ENCODE measurements at regions of chr10 and their contacts with region 1.

Region 1: DNA sequence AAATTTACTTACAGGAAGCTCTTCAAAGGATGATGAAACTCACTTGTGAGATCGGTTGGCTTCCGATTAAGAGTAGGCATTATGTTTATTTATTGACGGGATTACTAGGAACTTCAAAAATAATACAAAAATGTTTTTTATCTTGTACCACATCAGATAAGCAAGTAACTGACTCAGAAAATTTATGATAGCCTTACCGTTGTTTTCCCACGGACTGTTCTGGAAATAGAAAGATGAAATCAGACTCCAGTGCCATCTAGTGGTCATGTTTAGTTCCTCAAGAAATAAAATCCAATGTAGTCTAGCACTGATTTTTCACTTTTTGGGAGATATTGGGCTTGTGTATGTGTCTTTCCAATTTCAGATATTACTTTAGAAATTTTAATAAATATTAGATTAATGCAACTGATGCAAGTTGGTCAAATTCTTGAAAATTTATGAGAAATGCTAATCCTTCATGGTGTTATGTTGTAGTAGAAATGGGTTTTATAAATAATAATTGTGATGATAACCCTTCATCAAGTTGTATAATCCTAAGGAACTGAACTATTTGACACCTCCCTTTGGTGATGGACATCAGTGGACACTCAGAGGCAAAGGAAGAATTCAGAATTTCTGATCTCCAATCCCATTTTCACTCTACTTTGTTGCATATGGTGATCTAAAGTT is 168.8 kb downstream of the TMEM26 start:
- DNase-seq: peak; percentile 81
- H3K4me3 ChIP-seq: no peak overlapping the region
- H3K27ac ChIP-seq: no peak overlapping the region
- H3K4me1 ChIP-seq: no peaks in the 10 kb centered on the region
- H3K27me3 ChIP-seq: no peaks in the 10 kb centered on the region
- CTCF ChIP-seq: peak; percentile 79

Region 2: DNA sequence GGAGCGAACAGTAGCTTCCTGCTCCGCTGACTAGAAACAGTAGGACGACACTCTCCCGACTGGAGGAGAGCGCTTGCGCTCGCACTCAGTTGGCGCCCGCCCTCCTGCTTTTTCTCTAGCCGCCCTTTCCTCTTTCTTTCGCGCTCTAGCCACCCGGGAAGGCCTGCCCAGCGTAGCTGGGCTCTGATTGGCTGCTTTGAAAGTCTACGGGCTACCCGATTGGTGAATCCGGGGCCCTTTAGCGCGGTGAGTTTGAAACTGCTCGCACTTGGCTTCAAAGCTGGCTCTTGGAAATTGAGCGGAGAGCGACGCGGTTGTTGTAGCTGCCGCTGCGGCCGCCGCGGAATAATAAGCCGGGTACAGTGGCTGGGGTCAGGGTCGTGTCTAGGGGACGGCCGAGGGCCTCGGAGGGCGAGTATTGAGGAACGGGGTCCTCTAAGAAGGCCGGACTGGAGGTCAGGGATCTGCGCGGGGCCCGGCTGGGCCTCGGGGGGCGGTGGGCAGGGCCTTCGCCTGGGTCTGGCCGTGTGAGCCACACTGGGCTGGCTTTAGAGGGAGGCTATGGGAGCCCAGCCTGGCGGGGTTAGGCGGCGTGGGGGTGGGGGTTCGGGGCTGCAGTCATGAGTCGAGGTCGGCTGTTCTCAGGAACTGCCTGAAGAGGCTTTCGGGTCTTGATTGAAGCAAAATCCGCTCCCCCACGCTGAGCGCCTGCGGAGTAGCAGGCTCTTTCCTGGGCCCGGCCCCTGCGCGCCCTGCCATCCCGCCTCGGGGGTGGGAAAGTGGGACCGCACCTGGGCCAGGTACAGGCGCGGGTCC is 505.9 kb before region 1 on chr10 and contains the start of gene CDK1:
- CTCF ChIA-PET with region 1: no interaction called
- POLR2A ChIA-PET with region 1: no interaction called
- intact Hi-C with region 1: no loop called
- DNase-seq: peak; percentile 100
- H3K4me3 ChIP-seq: peak within 1 kb of the TSS; percentile 86
- H3K27ac ChIP-seq: peak within 1 kb of the TSS; percentile 94
- H3K4me1 ChIP-seq: peaks cover 24% of the 10 kb centered on the region
- H3K27me3 ChIP-seq: no peaks in the 10 kb centered on the region
- CTCF ChIP-seq: no peak
- total RNA-seq, gene CDK1: 153 and 168 TPM in 2 replicates

Region 3: GRCh38 chr10:60964257-60965235 is 319.8 kb before region 1 on chr10:
- CTCF ChIA-PET with region 1: no interaction called
- POLR2A ChIA-PET with region 1: no interaction called
- intact Hi-C with region 1: loop called (anchors 5 kb)
- DNase-seq: peak; percentile 90
- H3K4me3 ChIP-seq: no peak overlapping the region
- H3K27ac ChIP-seq: no peak overlapping the region
- H3K4me1 ChIP-seq: peaks cover 13% of the 10 kb centered on the region
- H3K27me3 ChIP-seq: no peaks in the 10 kb centered on the region
- CTCF ChIP-seq: peak; percentile 82

Region 4: GRCh38 chr10:61296161-61296560 is 11.8 kb after region 1 on chr10:
- CTCF ChIA-PET with region 1: no interaction called
- POLR2A ChIA-PET with region 1: no interaction called
- intact Hi-C with region 1: no loop called
- DNase-seq: no peak
- H3K4me3 ChIP-seq: no peak overlapping the region
- H3K27ac ChIP-seq: no peak overlapping the region
- H3K4me1 ChIP-seq: no peaks in the 10 kb centered on the region
- H3K27me3 ChIP-seq: no peaks in the 10 kb centered on the region
- CTCF ChIP-seq: no peak

Region 5: GRCh38 chr10:61313460-61313859 is 29.1 kb after region 1 on chr10:
- CTCF ChIA-PET with region 1: no interaction called
- POLR2A ChIA-PET with region 1: no interaction called
- intact Hi-C with region 1: no loop called
- DNase-seq: peak; percentile 88
- H3K4me3 ChIP-seq: no peak overlapping the region
- H3K27ac ChIP-seq: no peak overlapping the region
- H3K4me1 ChIP-seq: peaks cover 17% of the 10 kb centered on the region
- H3K27me3 ChIP-seq: peaks cover 3% of the 10 kb centered on the region
- CTCF ChIP-seq: no peak

Measured in A673 (cell line).